ENCODE measurements at regions of chr12 and their contacts with region 1.

Region 1: DNA sequence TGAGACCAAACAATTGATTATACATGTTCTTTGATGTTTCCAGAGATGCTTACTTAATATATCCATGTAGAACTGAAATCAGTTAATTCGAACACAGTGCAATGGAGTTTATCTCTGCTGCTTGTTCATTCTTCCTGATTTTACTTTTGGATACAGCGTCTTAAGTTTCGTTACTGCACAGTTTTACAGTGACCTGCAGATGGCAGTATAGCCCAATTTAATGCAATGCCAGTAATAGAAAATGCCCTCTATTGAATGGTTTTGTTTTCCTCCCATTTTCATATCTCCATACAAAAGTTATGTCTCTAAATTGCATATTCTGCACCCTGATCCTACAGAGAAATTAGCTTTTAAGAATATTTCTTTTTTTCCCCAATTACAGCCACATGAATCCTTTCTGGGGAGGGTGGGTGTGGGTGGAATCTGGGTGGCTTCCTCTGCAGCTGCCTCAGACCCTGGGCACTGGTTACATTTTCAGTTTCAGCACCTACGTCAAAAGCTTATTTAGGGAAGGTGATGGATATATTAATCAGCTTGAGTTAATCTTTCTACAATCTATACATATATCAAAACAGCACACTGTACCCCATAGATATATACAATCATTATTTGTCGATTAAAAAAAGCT is 101.1 kb upstream of the DCD start:
- DNase-seq: peak; percentile 22
- H3K4me3 Mint-ChIP-seq: peak overlapping the region; percentile 17
- H3K27ac Mint-ChIP-seq: no peak overlapping the region
- H3K4me1 Mint-ChIP-seq: peaks cover 20% of the 10 kb centered on the region
- H3K27me3 Mint-ChIP-seq: no peaks in the 10 kb centered on the region

Region 2: GRCh38 chr12:54701940-54702592 is 47.2 kb before region 1 on chr12:
- CTCF ChIA-PET with region 1: interaction called, 19 read pairs
- POLR2A ChIA-PET with region 1: no interaction called
- intact Hi-C with region 1: no loop called
- DNase-seq: no peak
- H3K4me3 Mint-ChIP-seq: no peak overlapping the region
- H3K27ac Mint-ChIP-seq: no peak overlapping the region
- H3K4me1 Mint-ChIP-seq: no peaks in the 10 kb centered on the region
- H3K27me3 Mint-ChIP-seq: peaks cover 4% of the 10 kb centered on the region

Region 3: DNA sequence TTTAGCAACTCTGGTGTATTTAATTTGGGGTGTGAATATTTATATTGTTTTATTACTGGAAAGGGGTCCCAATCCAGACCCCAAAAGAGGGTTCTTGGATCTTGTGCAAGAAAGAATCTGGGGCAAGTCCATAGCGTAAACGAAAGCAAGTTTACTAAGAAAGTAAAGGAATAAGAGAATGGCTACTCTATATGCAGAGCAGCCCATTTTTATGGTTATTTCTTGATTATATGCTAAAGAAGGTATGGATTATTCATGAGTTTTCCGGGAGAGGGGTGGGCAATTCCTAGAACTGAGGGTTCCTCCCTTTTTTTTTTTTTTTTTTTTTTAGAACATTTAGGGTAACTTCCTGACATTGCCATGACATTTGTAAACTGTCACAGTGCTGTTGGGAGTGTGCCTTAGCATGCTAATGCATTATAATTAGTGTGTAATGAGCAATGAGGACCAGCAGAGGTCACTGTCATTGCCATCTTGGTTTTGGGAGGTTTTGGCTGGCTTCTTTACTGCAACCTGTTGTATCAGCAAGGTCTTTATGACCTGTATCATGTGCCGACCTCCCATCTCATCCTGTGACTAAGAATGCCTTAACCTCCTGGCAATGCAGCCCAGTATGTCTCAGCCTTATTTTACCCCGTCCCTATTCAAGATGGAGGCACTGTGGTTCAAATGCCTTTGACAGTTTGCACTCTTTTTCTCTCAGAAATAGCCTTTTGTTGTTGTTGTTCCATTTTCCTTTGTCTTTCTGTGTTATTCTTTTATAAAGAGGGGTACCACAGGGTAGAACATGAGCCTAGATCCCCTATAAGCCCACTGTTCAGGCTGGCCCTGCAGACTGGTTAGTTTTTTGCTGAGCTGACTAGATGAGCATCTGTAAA is 25.7 kb before region 1 on chr12:
- CTCF ChIA-PET with region 1: interaction called, 23 read pairs
- POLR2A ChIA-PET with region 1: no interaction called
- intact Hi-C with region 1: no loop called
- DNase-seq: peak; percentile 32
- H3K4me3 Mint-ChIP-seq: no peak overlapping the region
- H3K27ac Mint-ChIP-seq: no peak overlapping the region
- H3K4me1 Mint-ChIP-seq: peaks cover 13% of the 10 kb centered on the region
- H3K27me3 Mint-ChIP-seq: peaks cover 2% of the 10 kb centered on the region

Region 4: GRCh38 chr12:54759751-54760150 is 10.4 kb after region 1 on chr12:
- CTCF ChIA-PET with region 1: interaction called, 29 read pairs
- POLR2A ChIA-PET with region 1: no interaction called
- intact Hi-C with region 1: no loop called
- DNase-seq: no peak
- H3K4me3 Mint-ChIP-seq: no peak overlapping the region
- H3K27ac Mint-ChIP-seq: no peak overlapping the region
- H3K4me1 Mint-ChIP-seq: peaks cover 6% of the 10 kb centered on the region
- H3K27me3 Mint-ChIP-seq: no peaks in the 10 kb centered on the region

Region 5: DNA sequence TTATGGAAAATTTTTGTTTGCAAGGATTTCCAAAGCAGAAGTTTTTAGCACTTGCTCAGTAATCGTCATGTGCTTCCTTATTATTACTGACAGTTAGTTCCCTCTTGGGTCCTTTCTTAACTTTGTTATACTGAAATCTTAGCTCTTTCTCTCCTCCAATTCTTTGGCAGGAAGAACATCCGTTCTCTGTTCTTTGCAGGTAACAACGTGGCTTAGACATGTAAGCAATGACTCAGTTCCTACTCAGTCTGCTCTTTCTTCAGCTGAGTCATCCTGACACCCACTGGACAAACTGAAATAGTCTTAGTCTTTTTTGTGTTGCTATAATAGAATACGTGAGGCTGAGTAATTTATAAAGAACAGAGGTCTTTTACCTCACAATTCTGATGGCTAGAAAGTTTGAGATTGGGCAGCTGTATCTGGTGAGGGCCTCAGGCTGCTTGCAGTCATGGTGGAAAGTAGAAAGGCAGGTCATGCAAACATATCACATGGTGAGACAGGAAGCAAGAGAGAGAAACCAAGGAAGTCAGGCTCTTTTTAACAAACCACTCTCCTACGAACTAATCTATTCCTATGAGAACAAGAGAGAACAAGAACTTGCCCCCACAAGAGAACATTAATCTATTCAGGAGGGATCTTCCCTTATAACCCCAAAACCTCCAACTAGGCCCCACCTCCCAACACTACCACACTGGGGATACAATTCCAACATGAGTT is 186.1 kb after region 1 on chr12:
- CTCF ChIA-PET with region 1: interaction called, 4 read pairs
- POLR2A ChIA-PET with region 1: no interaction called
- intact Hi-C with region 1: loop called (anchors 5 kb)
- DNase-seq: peak; percentile 72
- H3K4me3 Mint-ChIP-seq: peak overlapping the region; percentile 53
- H3K27ac Mint-ChIP-seq: peak overlapping the region; percentile 98
- H3K4me1 Mint-ChIP-seq: peaks cover 58% of the 10 kb centered on the region
- H3K27me3 Mint-ChIP-seq: no peaks in the 10 kb centered on the region

Region 6: DNA sequence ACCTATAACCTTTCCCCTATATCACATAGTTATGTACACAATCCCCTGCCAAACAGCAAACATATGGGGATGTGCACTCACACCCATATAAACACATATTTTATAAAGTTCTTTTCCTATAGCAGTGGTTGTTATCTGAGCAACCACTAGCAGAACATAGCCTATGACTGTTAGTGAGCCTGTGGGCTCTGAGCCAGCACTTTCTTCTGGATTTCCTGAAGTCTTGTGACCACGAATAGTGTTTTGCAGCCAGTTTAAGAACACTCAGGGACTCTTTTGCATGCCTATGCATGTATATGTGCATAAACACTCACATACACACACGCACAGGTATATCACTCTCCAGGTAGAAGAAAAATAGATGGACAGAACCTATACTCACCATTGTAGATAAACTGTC is 218.2 kb after region 1 on chr12:
- CTCF ChIA-PET with region 1: interaction called, 11 read pairs
- POLR2A ChIA-PET with region 1: no interaction called
- intact Hi-C with region 1: no loop called
- DNase-seq: peak; percentile 24
- H3K4me3 Mint-ChIP-seq: no peak overlapping the region
- H3K27ac Mint-ChIP-seq: peak overlapping the region; percentile 60
- H3K4me1 Mint-ChIP-seq: peaks cover 73% of the 10 kb centered on the region
- H3K27me3 Mint-ChIP-seq: no peaks in the 10 kb centered on the region

Region 7: GRCh38 chr12:54993161-54993835 is 244.0 kb after region 1 on chr12:
- CTCF ChIA-PET with region 1: interaction called, 83 read pairs
- POLR2A ChIA-PET with region 1: no interaction called
- intact Hi-C with region 1: no loop called
- DNase-seq: peak; percentile 57
- H3K4me3 Mint-ChIP-seq: no peak overlapping the region
- H3K27ac Mint-ChIP-seq: no peak overlapping the region
- H3K4me1 Mint-ChIP-seq: peaks cover 43% of the 10 kb centered on the region
- H3K27me3 Mint-ChIP-seq: no peaks in the 10 kb centered on the region

Measured in activated CD4-positive, alpha-beta memory T cell treated with anti-CD3 and anti-CD28 coated beads for 36 hours (primary cell).